Transverse colon (tissue), 4 donors: ENCODE measurements at regions of chr11 and their contacts with region 1.

Region 1: GRCh38 chr11:59164028-59164427 is 7.9 kb upstream of the DTX4 start:
- DNase-seq: no peak
- H3K4me3 ChIP-seq: no peak overlapping the region
- H3K27ac ChIP-seq: no peak overlapping the region
- H3K4me1 ChIP-seq: no peaks in the 10 kb centered on the region
- H3K27me3 ChIP-seq: no peaks in the 10 kb centered on the region
- CTCF ChIP-seq: no peak
- EP300 ChIP-seq: no peak
- POLR2A ChIP-seq: no peak

Region 2: GRCh38 chr11:59224351-59224928 is 60.4 kb after region 1 on chr11:
- in situ Hi-C with region 1: no loop called
- intact Hi-C with region 1: no loop called
- DNase-seq: no peak
- H3K4me3 ChIP-seq: no peak overlapping the region
- H3K27ac ChIP-seq: peak overlapping the region; percentile 57 to 68 (median 67)
- H3K4me1 ChIP-seq: peaks cover 0 to 18% (median 0%) of the 10 kb centered on the region in 4 donors
- H3K27me3 ChIP-seq: no peaks in the 10 kb centered on the region
- CTCF ChIP-seq: no peak
- EP300 ChIP-seq: no peak
- POLR2A ChIP-seq: no peak

Region 3: DNA sequence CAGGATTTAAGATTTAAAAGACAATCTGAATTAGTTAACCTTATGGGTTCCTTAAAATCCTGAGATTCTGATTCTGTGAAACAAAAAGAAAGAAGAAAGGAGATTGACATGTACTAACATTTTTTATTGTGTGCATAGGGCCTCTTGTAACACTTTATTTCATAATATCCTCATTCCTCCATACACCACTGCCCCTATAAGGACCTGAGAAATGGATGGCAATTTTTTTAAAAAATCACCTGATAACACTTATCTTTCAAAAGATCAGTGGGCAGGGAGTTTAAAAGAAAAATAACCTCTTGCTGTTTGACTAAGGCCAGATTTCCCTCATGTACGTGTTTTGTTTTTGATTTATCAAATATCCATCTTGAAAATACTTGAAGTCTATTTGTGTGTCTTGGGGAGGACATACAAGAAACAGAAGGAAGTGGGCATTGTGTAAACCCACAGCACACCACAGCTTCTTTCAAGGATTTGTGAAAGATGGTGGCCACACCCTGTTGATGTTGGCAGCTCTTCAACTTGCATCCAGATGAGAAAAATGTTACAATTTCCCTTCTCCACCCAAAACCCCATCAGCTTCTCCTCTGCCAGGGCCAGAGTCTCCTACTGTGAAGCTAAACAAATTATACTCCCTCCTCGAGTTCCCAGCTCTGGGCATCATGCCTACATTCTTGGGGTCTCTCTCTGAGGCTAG is 83.7 kb after region 1 on chr11:
- in situ Hi-C with region 1: no loop called
- intact Hi-C with region 1: no loop called
- DNase-seq: no peak
- H3K4me3 ChIP-seq: no peak overlapping the region
- H3K27ac ChIP-seq: no peak overlapping the region
- H3K4me1 ChIP-seq: peaks cover 0 to 8% (median 0%) of the 10 kb centered on the region in 4 donors
- H3K27me3 ChIP-seq: no peaks in the 10 kb centered on the region
- CTCF ChIP-seq: no peak
- EP300 ChIP-seq: no peak
- POLR2A ChIP-seq: no peak

Region 4: GRCh38 chr11:59283825-59284772 is 120.1 kb after region 1 on chr11:
- in situ Hi-C with region 1: loop called in 2 of 4 experiments (anchors 10 to 25 kb)
- intact Hi-C with region 1: loop called (anchors 2 kb)
- DNase-seq: peak; percentile 45
- H3K4me3 ChIP-seq: no peak overlapping the region
- H3K27ac ChIP-seq: no peak overlapping the region
- H3K4me1 ChIP-seq: no peaks in the 10 kb centered on the region
- H3K27me3 ChIP-seq: peaks cover 3% of the 10 kb centered on the region
- CTCF ChIP-seq: peak; percentile 80 to 86 (median 83)
- EP300 ChIP-seq: no peak
- POLR2A ChIP-seq: no peak

Region 5: GRCh38 chr11:59429924-59430516 is 266.0 kb after region 1 on chr11:
- in situ Hi-C with region 1: loop called in 2 of 4 experiments (anchors 10 to 25 kb)
- intact Hi-C with region 1: no loop called
- DNase-seq: no peak
- H3K4me3 ChIP-seq: no peak overlapping the region
- H3K27ac ChIP-seq: no peak overlapping the region
- H3K4me1 ChIP-seq: no peaks in the 10 kb centered on the region
- H3K27me3 ChIP-seq: peaks cover 7% of the 10 kb centered on the region
- CTCF ChIP-seq: peak; percentile 59 to 71 (median 65)
- EP300 ChIP-seq: no peak
- POLR2A ChIP-seq: no peak